Transverse colon (tissue), 4 donors: ENCODE measurements at regions of chr3 and their contacts with region 1.

Region 1: GRCh38 chr3:125003369-125003853 is 52.4 kb downstream of the HEG1 start:
- DNase-seq: peak; percentile 34
- H3K4me3 ChIP-seq: no peak overlapping the region
- H3K27ac ChIP-seq: peak overlapping the region; percentile 49 to 77 (median 72)
- H3K4me1 ChIP-seq: peaks cover 23 to 63% (median 31%) of the 10 kb centered on the region in 4 donors
- H3K27me3 ChIP-seq: no peaks in the 10 kb centered on the region
- CTCF ChIP-seq: no peak
- EP300 ChIP-seq: no peak
- POLR2A ChIP-seq: no peak

Region 2: DNA sequence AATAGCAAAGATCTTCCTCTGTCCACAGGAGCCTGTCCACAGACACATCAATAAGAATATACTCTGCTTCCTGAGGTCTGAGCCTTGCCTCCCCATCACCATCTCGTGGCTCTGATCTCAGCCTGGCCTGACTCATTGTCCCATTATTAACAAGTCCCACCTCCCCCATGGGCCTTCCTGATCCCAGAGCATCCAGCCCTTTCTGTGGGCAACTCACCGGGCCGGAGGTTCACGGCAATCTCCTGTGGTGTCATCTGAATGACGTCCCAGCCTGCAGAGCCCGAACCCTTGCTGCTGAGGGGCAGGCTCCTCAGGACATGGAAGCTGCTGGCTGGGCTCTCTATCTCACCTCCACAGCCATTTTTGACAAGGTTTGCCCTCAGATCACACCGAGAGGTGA is 144.4 kb before region 1 on chr3:
- in situ Hi-C with region 1: no loop called
- intact Hi-C with region 1: loop called (anchors 5 kb)
- DNase-seq: no peak
- H3K4me3 ChIP-seq: no peak overlapping the region
- H3K27ac ChIP-seq: peak overlapping the region; percentile 60 to 79 (median 66)
- H3K4me1 ChIP-seq: peaks cover 0 to 33% (median 8%) of the 10 kb centered on the region in 4 donors
- H3K27me3 ChIP-seq: no peaks in the 10 kb centered on the region
- CTCF ChIP-seq: no peak
- EP300 ChIP-seq: no peak
- POLR2A ChIP-seq: no peak

Region 3: DNA sequence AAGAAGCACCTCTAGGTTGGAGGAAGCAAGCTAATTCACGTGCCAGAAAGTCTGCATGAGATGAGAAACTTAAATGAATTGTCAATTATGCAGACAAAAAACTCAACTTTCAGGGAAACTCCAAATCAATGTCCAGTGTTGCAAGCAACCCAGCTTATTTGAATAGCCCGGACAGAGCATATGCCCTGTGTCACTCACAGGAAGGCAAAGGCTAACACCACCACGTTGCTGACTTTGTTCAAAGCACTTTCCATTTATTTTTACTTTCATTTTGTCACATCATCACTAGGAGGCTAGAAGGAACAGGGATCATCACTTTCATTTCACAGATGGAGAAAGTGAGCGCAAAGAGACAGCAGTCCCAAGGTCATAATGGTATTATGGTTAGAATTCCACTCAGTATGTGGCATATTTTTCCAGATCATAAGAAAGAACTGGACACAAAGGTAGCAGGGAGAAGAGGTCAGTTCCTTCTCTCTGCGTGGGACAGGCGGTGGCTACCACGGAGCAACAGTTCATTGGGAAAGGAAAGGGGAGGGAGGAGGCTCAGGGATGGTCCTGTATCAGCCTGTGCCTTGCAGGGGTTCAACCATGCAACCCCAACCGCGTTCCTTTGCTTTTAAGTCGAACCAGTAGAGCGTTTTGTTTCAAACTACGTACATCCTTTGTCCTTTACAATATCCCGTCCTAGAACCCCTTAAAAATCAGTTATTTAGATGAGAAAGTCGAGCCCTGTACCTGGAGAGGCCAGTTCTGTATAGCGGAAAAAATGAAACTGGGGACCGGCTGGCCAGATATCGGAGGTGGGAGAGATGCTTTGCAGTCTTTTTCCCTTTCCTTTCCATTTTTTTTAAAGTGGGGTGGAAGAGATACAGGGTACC is 51.3 kb after region 1 on chr3:
- in situ Hi-C with region 1: no loop called
- intact Hi-C with region 1: loop called (anchors 5 kb)
- DNase-seq: no peak
- H3K4me3 ChIP-seq: peak overlapping the region; percentile 47 to 81 (median 59)
- H3K27ac ChIP-seq: peak overlapping the region; percentile 87 to 90 (median 89)
- H3K4me1 ChIP-seq: peaks cover 31 to 59% (median 37%) of the 10 kb centered on the region in 4 donors
- H3K27me3 ChIP-seq: peaks cover 5% of the 10 kb centered on the region
- CTCF ChIP-seq: peak in 2 of 5 experiments; percentile 24 to 36
- EP300 ChIP-seq: no peak
- POLR2A ChIP-seq: peak; percentile 48